Naive thymus-derived CD4-positive, alpha-beta T cell (primary cell): ENCODE measurements at regions of chr3 and their contacts with region 1.

Region 1: GRCh38 chr3:99023590-99024192 is 122.2 kb upstream of the DCBLD2 start:
- DNase-seq: peak in 2 of 9 donors; percentile 2 to 3
- ATAC-seq: no peak
- H3K4me3 ChIP-seq: no peak overlapping the region
- H3K4me3 Mint-ChIP-seq: no peak overlapping the region
- H3K27ac ChIP-seq: no peak overlapping the region
- H3K27ac Mint-ChIP-seq: no peak overlapping the region
- H3K4me1 ChIP-seq: no peaks in the 10 kb centered on the region
- H3K4me1 Mint-ChIP-seq: no peaks in the 10 kb centered on the region
- H3K27me3 ChIP-seq: peaks cover 0 to 3% of the 10 kb centered on the region in 2 donors
- H3K27me3 Mint-ChIP-seq: peaks cover 0 to 29% (median 18%) of the 10 kb centered on the region in 5 donors

Region 2: DNA sequence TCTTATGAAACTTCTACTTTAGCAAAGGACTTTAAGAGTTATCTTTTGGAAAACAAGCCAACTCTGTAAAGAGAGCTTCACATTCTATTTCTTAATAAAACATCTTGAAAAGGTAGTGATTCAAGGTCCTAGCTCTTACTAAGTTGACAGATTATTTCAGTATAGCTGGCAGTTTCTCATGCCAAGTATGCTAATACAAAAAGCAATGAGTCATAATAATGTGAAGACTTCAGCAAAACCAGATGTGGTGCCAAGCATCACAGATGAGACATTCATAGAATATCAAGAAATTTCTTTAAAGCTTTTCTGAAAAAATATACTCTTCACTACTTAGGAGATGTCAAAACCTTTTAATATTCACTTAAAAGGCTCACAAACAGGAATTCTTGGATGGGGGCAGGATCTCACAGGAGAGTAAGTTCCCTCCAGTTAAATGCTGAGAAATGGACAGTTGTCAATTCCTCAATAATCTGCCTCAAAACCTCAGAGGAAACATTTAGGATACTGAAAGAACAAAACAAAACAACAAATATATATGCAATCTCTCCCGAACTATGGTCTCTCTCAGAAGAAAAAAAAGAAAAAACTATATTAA is 167.8 kb before region 1 on chr3:
- CTCF ChIA-PET with region 1: no interaction called
- POLR2A ChIA-PET with region 1: no interaction called
- intact Hi-C with region 1: no loop called
- DNase-seq: no peak
- ATAC-seq: no peak
- H3K4me3 ChIP-seq: no peak overlapping the region
- H3K4me3 Mint-ChIP-seq: no peak overlapping the region
- H3K27ac ChIP-seq: no peak overlapping the region
- H3K27ac Mint-ChIP-seq: no peak overlapping the region
- H3K4me1 ChIP-seq: no peaks in the 10 kb centered on the region
- H3K4me1 Mint-ChIP-seq: no peaks in the 10 kb centered on the region
- H3K27me3 ChIP-seq: no peaks in the 10 kb centered on the region
- H3K27me3 Mint-ChIP-seq: no peaks in the 10 kb centered on the region

Region 3: GRCh38 chr3:99172736-99173657 is 149.3 kb after region 1 on chr3:
- CTCF ChIA-PET with region 1: no interaction called
- POLR2A ChIA-PET with region 1: no interaction called
- intact Hi-C with region 1: loop called in 1 of 2 experiments (anchors 2 kb)
- DNase-seq: peak in 3 of 9 donors; percentile 10 to 28 (median 10)
- ATAC-seq: no peak
- H3K4me3 ChIP-seq: no peak overlapping the region
- H3K4me3 Mint-ChIP-seq: no peak overlapping the region
- H3K27ac ChIP-seq: no peak overlapping the region
- H3K27ac Mint-ChIP-seq: no peak overlapping the region
- H3K4me1 ChIP-seq: no peaks in the 10 kb centered on the region
- H3K4me1 Mint-ChIP-seq: no peaks in the 10 kb centered on the region
- H3K27me3 ChIP-seq: no peaks in the 10 kb centered on the region
- H3K27me3 Mint-ChIP-seq: no peaks in the 10 kb centered on the region

Region 4: GRCh38 chr3:99686955-99687612 is 663.4 kb after region 1 on chr3:
- CTCF ChIA-PET with region 1: no interaction called
- POLR2A ChIA-PET with region 1: no interaction called
- intact Hi-C with region 1: loop called in 1 of 2 experiments (anchors 10 kb)
- DNase-seq: peak in 2 of 9 donors; percentile 12 to 31
- ATAC-seq: no peak
- H3K4me3 ChIP-seq: no peak overlapping the region
- H3K4me3 Mint-ChIP-seq: no peak overlapping the region
- H3K27ac ChIP-seq: no peak overlapping the region
- H3K27ac Mint-ChIP-seq: no peak overlapping the region
- H3K4me1 ChIP-seq: no peaks in the 10 kb centered on the region
- H3K4me1 Mint-ChIP-seq: no peaks in the 10 kb centered on the region
- H3K27me3 ChIP-seq: no peaks in the 10 kb centered on the region
- H3K27me3 Mint-ChIP-seq: peaks cover 4 to 20% (median 9%) of the 10 kb centered on the region in 5 donors

Region 5: GRCh38 chr3:99789011-99789721 is 765.5 kb after region 1 on chr3:
- CTCF ChIA-PET with region 1: no interaction called
- POLR2A ChIA-PET with region 1: no interaction called
- intact Hi-C with region 1: loop called in 1 of 2 experiments (anchors 1 kb)
- DNase-seq: peak in 3 of 9 donors; percentile 1 to 10 (median 9)
- ATAC-seq: peak; percentile 76
- H3K4me3 ChIP-seq: no peak overlapping the region
- H3K4me3 Mint-ChIP-seq: no peak overlapping the region
- H3K27ac ChIP-seq: no peak overlapping the region
- H3K27ac Mint-ChIP-seq: no peak overlapping the region
- H3K4me1 ChIP-seq: no peaks in the 10 kb centered on the region
- H3K4me1 Mint-ChIP-seq: peaks cover 0 to 3% (median 0%) of the 10 kb centered on the region in 7 donors
- H3K27me3 ChIP-seq: no peaks in the 10 kb centered on the region
- H3K27me3 Mint-ChIP-seq: peaks cover 0 to 40% (median 8%) of the 10 kb centered on the region in 5 donors